Left cardiac atrium (tissue), 4 donors: ENCODE measurements at regions of chr17 and their contacts with region 1.

Region 1: GRCh38 chr17:40536295-40537171 is 28.7 kb downstream of the CCR7 start:
- DNase-seq: peak; percentile 81
- ATAC-seq: peak; percentile 12 to 42

Region 2: GRCh38 chr17:40422990-40423616 is 113.4 kb before region 1 on chr17:
- intact Hi-C with region 1: no loop called
- DNase-seq: no peak
- ATAC-seq: no peak

Region 3: GRCh38 chr17:40559954-40560591 is 23.5 kb after region 1 on chr17:
- intact Hi-C with region 1: loop called in 1 of 2 experiments (anchors 1 kb)
- DNase-seq: peak; percentile 89
- ATAC-seq: peak; percentile 81 to 84

Region 4: DNA sequence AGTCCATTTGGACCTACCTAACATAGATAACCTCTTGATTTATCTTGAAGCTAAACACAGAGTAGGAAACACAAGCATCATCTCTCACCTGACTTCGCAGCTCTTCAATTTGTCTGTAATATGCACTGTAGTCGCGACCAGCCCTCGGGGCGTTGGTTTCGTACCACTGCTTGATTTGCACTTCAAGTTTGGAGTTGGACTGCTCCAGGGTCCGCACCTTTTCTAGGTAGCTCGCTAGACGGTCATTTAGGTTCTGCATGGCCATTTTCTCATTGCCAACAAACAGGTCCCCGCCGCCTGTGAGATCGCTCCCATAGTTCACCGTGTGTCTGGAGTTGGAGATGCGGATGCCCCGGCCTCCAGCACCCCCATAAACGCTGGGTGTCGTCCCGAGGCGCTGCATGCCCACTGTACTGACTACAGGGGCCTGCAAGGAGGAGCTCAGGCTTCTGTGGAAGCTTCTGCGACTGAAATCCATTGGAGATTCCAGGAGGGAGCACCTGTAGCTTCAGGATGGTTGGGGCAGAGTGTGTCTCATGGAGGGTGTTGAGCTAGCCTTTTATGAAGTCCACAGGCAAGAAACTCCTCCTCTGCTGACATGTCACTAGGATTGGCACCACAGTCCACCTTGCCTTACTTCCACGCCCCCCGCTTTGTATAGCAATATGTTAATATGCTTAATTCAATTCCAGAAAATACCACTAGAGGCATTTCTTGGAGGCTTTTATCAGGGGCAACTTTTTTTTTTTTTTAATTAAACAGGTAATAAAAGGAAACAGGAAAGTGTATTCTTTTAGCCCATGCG is 348.4 kb after region 1 on chr17 and contains the start of gene KRT20:
- intact Hi-C with region 1: no loop called
- DNase-seq: no peak
- ATAC-seq: no peak
- total RNA-seq, gene KRT20: not detected